Activated T-helper 2 cell treated with anti-CD3 and anti-CD28 coated beads, Interferon-gamma antibody, Interleukin-2, Interleukin-4, amounts not matched to agents 10 μg/mL and 5 μg/mL and 100 μg/mL, durations not matched to agents 14 hours and 24 hours and 36 hours (primary cell): ENCODE measurements at regions of chr10 and their contacts with region 1.

Region 1: DNA sequence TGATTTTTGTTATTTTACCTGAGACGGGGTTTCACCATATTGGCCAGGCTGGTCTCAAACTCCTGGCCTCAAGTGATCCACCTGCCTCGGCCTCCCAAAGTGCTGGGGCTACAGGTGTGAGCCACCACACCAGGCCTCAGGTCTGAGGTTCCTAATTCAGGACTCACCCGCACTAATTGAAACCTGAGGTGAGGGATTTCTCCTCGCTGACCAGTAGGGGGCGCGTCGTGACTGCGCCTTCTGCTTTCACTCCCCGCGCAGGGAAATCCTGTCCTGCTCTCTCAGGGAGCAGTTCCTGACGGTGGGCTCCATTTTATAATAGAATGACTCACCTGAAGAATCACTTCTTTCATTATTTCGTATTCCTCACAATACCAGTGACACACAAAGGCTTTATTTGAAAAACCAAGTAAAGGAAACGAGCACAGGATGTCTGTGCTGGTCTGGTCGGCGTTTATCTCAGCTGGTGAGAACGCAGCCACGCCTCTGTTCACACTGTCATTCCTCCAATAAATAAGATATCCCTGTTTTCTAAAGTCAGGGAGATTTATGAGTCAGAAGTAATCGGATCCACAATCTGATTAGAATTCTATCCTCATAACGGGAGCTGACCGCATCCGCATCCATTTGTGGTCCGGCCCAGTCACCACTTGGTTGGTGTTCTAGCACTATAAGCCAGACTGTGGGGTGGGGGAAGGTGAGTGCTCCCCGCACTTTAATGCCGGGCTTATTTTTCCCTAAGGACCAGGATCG is 35.4 kb downstream of the BAG3 start:
- DNase-seq: peak; percentile 60
- H3K4me3 Mint-ChIP-seq: no peak overlapping the region
- H3K27ac Mint-ChIP-seq: no peak overlapping the region
- H3K4me1 Mint-ChIP-seq: peaks cover 24% of the 10 kb centered on the region
- H3K27me3 Mint-ChIP-seq: peaks cover 3% of the 10 kb centered on the region

Region 2: DNA sequence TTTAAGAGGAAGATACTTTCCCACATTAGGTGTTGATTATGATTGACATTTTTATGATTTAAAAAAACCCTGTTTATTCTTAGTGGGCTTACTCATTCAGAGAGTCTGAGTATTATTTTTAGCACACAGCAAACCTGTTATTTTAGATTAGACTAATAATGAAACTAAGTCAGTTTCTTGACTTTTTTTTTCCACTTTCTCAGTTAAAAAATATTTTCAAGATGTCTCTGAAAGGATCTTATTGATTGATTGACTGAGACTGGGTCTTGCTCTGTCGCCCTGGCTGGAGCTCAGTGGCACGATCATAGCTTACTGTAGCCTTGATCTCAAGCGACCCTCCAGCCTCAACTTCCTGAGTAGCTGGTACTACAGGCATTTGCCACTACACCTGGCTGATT is 18.8 kb after region 1 on chr10:
- intact Hi-C with region 1: loop called (anchors 1 kb)
- DNase-seq: no peak
- H3K4me3 Mint-ChIP-seq: peak overlapping the region; percentile 33
- H3K27ac Mint-ChIP-seq: peak overlapping the region; percentile 96
- H3K4me1 Mint-ChIP-seq: peaks cover 58% of the 10 kb centered on the region
- H3K27me3 Mint-ChIP-seq: no peaks in the 10 kb centered on the region

Region 3: DNA sequence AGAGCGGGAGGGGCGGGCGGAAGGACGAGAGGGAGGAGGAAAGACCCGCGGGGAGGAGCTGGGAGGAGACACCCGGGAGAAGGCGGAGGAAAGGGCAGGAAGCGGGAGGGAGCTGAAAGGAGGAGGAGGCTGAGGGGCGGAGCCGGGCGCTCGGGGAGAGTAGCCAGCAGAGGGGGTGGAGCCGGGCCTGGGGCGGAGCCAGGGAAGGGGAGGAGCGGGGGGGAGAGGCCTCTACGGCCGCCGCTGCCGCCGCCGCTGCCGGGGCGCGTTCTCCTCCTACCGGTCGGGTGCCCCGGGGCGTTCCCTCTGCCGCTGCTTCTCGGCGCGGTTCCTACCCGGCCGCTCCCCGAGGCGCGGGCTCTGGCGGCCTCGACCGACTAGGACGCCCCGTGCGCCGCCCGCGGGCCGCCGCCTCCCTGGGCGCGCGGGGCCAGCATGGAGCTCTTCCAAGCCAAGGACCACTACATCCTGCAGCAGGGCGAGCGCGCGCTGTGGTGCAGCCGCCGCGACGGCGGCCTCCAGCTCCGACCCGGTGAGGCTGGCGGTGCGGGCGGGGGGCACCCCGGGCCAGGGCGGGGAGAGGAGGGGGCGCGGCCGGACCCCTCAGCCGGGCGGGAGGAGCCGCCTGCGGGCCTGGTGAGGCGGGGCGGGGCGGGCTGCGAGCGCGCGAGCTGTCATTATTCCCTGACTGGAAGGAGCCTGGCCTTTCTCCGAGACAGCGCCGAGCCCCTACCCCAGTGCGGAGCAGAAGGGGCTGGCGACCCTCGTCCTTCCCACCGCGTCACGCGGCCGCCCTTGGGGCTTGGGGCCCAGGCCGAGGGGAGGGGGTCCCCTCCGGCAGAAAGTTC is 39.4 kb after region 1 on chr10 and contains the start of gene INPP5F:
- intact Hi-C with region 1: loop called (anchors 1 kb)
- DNase-seq: peak; percentile 98
- H3K4me3 Mint-ChIP-seq: peak within 1 kb of the TSS; percentile 83
- H3K27ac Mint-ChIP-seq: peak within 1 kb of the TSS; percentile 80
- H3K4me1 Mint-ChIP-seq: peaks cover 33% of the 10 kb centered on the region
- H3K27me3 Mint-ChIP-seq: peaks cover 4% of the 10 kb centered on the region
- total RNA-seq, gene INPP5F: 10.2 and 11.9 TPM in 2 replicates

Region 4: DNA sequence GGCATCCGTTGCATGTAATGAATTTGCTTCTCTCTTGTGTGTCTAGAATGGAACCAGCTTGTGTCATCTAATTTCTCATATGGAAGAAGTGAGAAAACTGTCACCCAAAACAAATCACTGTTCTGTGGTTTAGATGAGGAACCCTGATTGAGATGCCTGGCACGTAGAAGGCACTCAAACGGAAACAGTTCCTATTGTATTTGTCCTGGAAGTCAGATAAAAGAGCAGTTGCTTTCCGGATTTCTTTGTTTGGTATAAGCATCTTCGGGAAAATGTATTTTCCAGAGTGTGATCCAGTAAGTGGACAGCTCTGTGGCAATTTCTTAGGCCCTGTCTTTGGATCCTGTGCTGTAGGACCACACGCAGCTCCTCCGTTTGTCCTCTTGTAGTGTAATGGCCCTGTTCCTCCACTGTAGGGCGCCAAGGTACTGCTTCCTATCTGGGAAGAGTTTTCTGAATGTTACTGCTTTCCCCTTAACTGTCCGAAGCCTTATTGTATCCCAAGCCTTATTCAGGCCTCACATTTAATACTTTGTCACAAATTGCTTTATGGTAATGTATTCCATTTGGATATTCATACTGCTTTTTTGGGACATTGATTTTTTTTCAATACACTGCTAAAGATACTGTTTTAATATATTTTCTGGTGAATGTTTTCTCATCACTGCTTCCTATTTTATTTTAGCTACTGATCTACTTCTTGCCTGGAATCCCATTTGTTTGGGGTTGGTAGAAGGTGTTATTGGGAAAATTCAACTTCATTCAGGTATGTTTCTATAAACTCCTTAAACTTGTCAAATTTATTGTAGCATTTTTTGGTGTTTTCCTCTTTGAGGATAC is 64.0 kb after region 1 on chr10:
- intact Hi-C with region 1: loop called (anchors 1 kb)
- DNase-seq: peak; percentile 28
- H3K4me3 Mint-ChIP-seq: no peak overlapping the region
- H3K27ac Mint-ChIP-seq: no peak overlapping the region
- H3K4me1 Mint-ChIP-seq: peaks cover 7% of the 10 kb centered on the region
- H3K27me3 Mint-ChIP-seq: no peaks in the 10 kb centered on the region

Region 5: DNA sequence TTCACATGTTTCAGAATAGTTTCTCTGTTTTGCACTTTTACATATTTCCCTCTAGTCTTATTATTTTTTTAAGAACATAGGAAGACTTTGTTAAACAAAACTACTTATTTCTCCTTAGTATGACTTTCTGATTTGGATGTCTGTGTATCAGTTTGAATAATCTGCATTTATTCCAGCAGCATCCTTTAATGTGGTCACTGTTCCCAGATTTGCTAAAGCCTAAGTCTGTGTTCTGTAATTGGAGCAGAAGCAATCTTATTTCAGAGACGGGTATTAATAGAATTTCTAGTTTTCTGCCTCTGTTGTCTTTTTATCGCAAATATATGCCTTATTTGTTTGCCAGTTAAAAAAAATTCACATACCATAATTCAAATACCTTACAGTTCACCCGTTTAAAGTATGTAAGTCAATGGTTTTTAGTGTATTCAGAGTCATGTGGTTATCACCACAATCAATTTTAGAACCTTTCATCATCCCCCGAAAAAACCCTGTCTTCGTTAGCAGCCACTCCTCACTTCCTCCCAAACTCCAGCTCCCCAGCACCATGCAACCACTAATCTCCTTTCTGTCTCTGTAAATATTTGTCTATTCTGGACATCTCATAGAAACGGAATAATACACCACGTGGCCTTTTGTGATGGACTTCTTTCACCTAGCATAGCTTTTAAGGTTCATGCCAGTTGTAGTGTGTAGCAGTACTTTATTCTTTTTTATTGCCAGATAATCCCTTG is 97.9 kb after region 1 on chr10:
- intact Hi-C with region 1: no loop called
- DNase-seq: no peak
- H3K4me3 Mint-ChIP-seq: no peak overlapping the region
- H3K27ac Mint-ChIP-seq: no peak overlapping the region
- H3K4me1 Mint-ChIP-seq: peaks cover 31% of the 10 kb centered on the region
- H3K27me3 Mint-ChIP-seq: peaks cover 1% of the 10 kb centered on the region

Region 6: GRCh38 chr10:119859420-119860258 is 173.0 kb after region 1 on chr10:
- intact Hi-C with region 1: loop called (anchors 1 kb)
- DNase-seq: no peak
- H3K4me3 Mint-ChIP-seq: no peak overlapping the region
- H3K27ac Mint-ChIP-seq: no peak overlapping the region
- H3K4me1 Mint-ChIP-seq: peaks cover 30% of the 10 kb centered on the region
- H3K27me3 Mint-ChIP-seq: no peaks in the 10 kb centered on the region